ENCODE measurements at regions of chr15 and their contacts with region 1.

Region 1: GRCh38 chr15:90286678-90287077 is 21.2 kb downstream of the NGRN start:
- DNase-seq: peak in 7 of 9 donors; percentile 39 to 68 (median 61)
- ATAC-seq: peak; percentile 88
- H3K4me3 ChIP-seq: no peak overlapping the region
- H3K4me3 Mint-ChIP-seq: no peak overlapping the region
- H3K27ac ChIP-seq: no peak overlapping the region
- H3K27ac Mint-ChIP-seq: no peak overlapping the region
- H3K4me1 ChIP-seq: no peaks in the 10 kb centered on the region
- H3K4me1 Mint-ChIP-seq: peaks cover 0 to 5% (median 0%) of the 10 kb centered on the region in 7 donors
- H3K27me3 ChIP-seq: no peaks in the 10 kb centered on the region
- H3K27me3 Mint-ChIP-seq: peaks cover 0 to 10% (median 0%) of the 10 kb centered on the region in 5 donors

Region 2: GRCh38 chr15:90143166-90143655 is 143.5 kb before region 1 on chr15:
- CTCF ChIA-PET with region 1: interaction called, 3 read pairs
- POLR2A ChIA-PET with region 1: no interaction called
- intact Hi-C with region 1: loop called (anchors 1 kb)
- DNase-seq: peak; percentile 50 to 67 (median 58)
- ATAC-seq: peak; percentile 88
- H3K4me3 ChIP-seq: peak overlapping the region; percentile 9
- H3K4me3 Mint-ChIP-seq: peak overlapping the region; percentile 49 to 77 (median 67)
- H3K27ac ChIP-seq: no peak overlapping the region
- H3K27ac Mint-ChIP-seq: peak overlapping the region in 8 of 9 donors; percentile 37 to 92 (median 79)
- H3K4me1 ChIP-seq: peaks cover 0 to 4% of the 10 kb centered on the region in 2 donors
- H3K4me1 Mint-ChIP-seq: peaks cover 6 to 36% (median 26%) of the 10 kb centered on the region in 7 donors
- H3K27me3 ChIP-seq: no peaks in the 10 kb centered on the region
- H3K27me3 Mint-ChIP-seq: peaks cover 0 to 2% (median 0%) of the 10 kb centered on the region in 5 donors